Naive thymus-derived CD4-positive, alpha-beta T cell (primary cell): ENCODE measurements at regions of chr10 and their contacts with region 1.

Region 1: GRCh38 chr10:70575874-70576802 is 26.4 kb downstream of the PRF1 start:
- DNase-seq: no peak
- ATAC-seq: peak; percentile 77
- H3K4me3 ChIP-seq: no peak overlapping the region
- H3K4me3 Mint-ChIP-seq: peak overlapping the region in 9 of 10 donors; percentile 4 to 53 (median 26)
- H3K27ac ChIP-seq: no peak overlapping the region
- H3K27ac Mint-ChIP-seq: peak overlapping the region in 8 of 9 donors; percentile 2 to 84 (median 66)
- H3K4me1 ChIP-seq: peaks cover 34 to 47% of the 10 kb centered on the region in 2 donors
- H3K4me1 Mint-ChIP-seq: peaks cover 44 to 64% (median 48%) of the 10 kb centered on the region in 7 donors
- H3K27me3 ChIP-seq: no peaks in the 10 kb centered on the region
- H3K27me3 Mint-ChIP-seq: peaks cover 0 to 1% (median 0%) of the 10 kb centered on the region in 5 donors

Region 2: DNA sequence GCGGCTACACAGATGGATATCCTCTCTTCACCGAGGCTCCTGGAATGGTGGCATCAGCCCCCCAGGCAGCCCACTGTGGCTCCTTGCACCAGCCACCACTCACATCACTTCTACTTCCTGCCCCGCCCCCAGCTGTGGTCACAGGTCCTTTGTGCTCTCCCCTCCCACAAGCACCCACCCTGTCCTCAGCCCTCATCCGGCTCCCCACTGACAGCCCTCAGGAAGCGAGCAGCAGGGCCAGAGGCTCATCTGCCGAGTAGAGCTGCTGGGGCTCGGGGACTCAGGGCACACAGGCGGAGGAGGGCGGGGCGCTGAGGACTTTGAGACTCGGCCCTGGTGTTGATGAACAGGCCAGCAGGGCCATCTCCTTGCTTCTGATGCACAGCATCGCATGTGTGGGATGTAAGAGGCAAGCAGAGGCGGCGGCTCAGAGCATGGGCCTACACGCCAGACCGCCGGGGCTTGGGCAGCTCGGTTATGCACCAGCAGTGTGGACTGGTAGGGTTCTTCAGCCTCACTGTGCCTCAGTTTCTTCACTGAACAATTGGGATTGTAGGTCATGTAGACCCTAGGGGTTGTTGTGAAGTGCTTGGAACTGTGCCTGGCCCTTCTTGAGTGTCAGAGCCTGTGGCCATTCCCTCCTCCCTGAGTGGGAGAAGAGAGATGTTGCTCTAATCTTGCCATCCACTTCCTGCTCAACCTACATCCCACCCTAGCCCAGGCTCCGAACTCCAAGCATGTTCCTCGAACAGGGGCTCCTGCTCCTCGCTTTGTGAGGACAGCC is 26.7 kb after region 1 on chr10 and contains the start of gene PRF1:
- CTCF ChIA-PET with region 1: no interaction called
- POLR2A ChIA-PET with region 1: interaction called, 4 read pairs
- intact Hi-C with region 1: loop called (anchors 1 to 2 kb)
- DNase-seq: peak; percentile 42 to 79 (median 74)
- ATAC-seq: peak; percentile 85
- H3K4me3 ChIP-seq: peak within 1 kb of the TSS; percentile 88
- H3K4me3 Mint-ChIP-seq: peak within 1 kb of the TSS; percentile 82 to 99 (median 94)
- H3K27ac ChIP-seq: peak within 1 kb of the TSS; percentile 66
- H3K27ac Mint-ChIP-seq: peak within 1 kb of the TSS; percentile 83 to 98 (median 93)
- H3K4me1 ChIP-seq: peaks cover 28 to 37% of the 10 kb centered on the region in 2 donors
- H3K4me1 Mint-ChIP-seq: peaks cover 29 to 60% (median 51%) of the 10 kb centered on the region in 7 donors
- H3K27me3 ChIP-seq: no peaks in the 10 kb centered on the region
- H3K27me3 Mint-ChIP-seq: no peaks in the 10 kb centered on the region
- total RNA-seq, gene PRF1: 8.1 to 198 (median 30.7) TPM

Region 3: GRCh38 chr10:70619271-70620019 is 43.3 kb after region 1 on chr10:
- CTCF ChIA-PET with region 1: interaction called, 4 read pairs
- POLR2A ChIA-PET with region 1: no interaction called
- intact Hi-C with region 1: loop called in 1 of 2 experiments (anchors 1 kb)
- DNase-seq: no peak
- ATAC-seq: no peak
- H3K4me3 ChIP-seq: no peak overlapping the region
- H3K4me3 Mint-ChIP-seq: no peak overlapping the region
- H3K27ac ChIP-seq: no peak overlapping the region
- H3K27ac Mint-ChIP-seq: no peak overlapping the region
- H3K4me1 ChIP-seq: peaks cover 0 to 45% of the 10 kb centered on the region in 2 donors
- H3K4me1 Mint-ChIP-seq: peaks cover 0 to 33% (median 5%) of the 10 kb centered on the region in 7 donors
- H3K27me3 ChIP-seq: no peaks in the 10 kb centered on the region
- H3K27me3 Mint-ChIP-seq: peaks cover 0 to 8% (median 0%) of the 10 kb centered on the region in 5 donors

Region 4: GRCh38 chr10:70664702-70665195 is 88.6 kb after region 1 on chr10:
- CTCF ChIA-PET with region 1: no interaction called
- POLR2A ChIA-PET with region 1: no interaction called
- intact Hi-C with region 1: loop called in 1 of 2 experiments (anchors 10 kb)
- DNase-seq: no peak
- ATAC-seq: no peak
- H3K4me3 ChIP-seq: no peak overlapping the region
- H3K4me3 Mint-ChIP-seq: no peak overlapping the region
- H3K27ac ChIP-seq: no peak overlapping the region
- H3K27ac Mint-ChIP-seq: no peak overlapping the region
- H3K4me1 ChIP-seq: no peaks in the 10 kb centered on the region
- H3K4me1 Mint-ChIP-seq: no peaks in the 10 kb centered on the region
- H3K27me3 ChIP-seq: no peaks in the 10 kb centered on the region
- H3K27me3 Mint-ChIP-seq: peaks cover under 1 to 19% (median 7%) of the 10 kb centered on the region in 5 donors

Region 5: GRCh38 chr10:71033396-71033980 is 457.4 kb after region 1 on chr10:
- CTCF ChIA-PET with region 1: no interaction called
- POLR2A ChIA-PET with region 1: no interaction called
- intact Hi-C with region 1: no loop called
- DNase-seq: no peak
- ATAC-seq: no peak
- H3K4me3 ChIP-seq: no peak overlapping the region
- H3K4me3 Mint-ChIP-seq: no peak overlapping the region
- H3K27ac ChIP-seq: no peak overlapping the region
- H3K27ac Mint-ChIP-seq: no peak overlapping the region
- H3K4me1 ChIP-seq: no peaks in the 10 kb centered on the region
- H3K4me1 Mint-ChIP-seq: peaks cover 0 to 2% (median 0%) of the 10 kb centered on the region in 7 donors
- H3K27me3 ChIP-seq: no peaks in the 10 kb centered on the region
- H3K27me3 Mint-ChIP-seq: peaks cover 0 to 4% (median 0%) of the 10 kb centered on the region in 5 donors